ENCODE measurements at regions of chr1 and their contacts with region 1.

Region 1: DNA sequence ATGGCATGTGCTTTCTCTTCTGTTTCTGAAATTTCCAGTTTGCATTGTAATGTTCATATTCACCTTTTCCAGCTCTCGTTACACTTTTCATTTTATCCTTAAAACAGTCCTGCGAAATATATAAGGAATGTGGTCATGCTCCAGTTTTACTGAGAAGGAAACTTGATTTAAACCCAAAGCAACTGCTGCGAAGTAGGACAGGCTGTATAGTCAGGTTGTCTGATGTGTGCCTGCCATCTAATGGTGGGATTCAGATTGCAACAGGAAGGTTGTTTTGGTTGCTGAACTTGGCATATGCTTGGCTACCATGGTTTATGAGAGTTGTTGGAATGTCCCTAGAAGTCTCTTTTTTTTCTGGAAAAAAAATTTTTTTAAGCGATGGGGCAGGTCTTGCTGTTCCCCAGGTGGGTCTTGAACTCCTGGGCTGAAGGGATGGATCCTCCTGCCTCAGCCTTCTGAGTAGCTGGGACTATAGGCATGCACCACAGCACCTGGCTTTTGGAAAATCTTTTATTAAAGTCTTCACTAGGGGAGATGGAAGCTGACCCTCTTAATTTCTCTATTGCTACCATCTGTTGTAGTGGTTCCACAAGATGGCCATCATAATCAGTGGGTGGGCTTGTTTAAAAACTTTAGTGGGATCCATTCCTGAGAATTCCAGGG is 86.9 kb downstream of the UCK2 start:
- DNase-seq: peak; percentile 64 to 65
- H3K4me3 ChIP-seq: no peak overlapping the region
- H3K27ac ChIP-seq: no peak overlapping the region
- H3K4me1 ChIP-seq: no peaks in the 10 kb centered on the region
- H3K27me3 ChIP-seq: no peaks in the 10 kb centered on the region
- CTCF ChIP-seq: peak; percentile 70 to 96 (median 86)
- POLR2A ChIP-seq: no peak

Region 2: GRCh38 chr1:165392634-165393571 is 521.4 kb before region 1 on chr1:
- intact Hi-C with region 1: loop called (anchors 10 kb)
- DNase-seq: peak; percentile 75 to 77
- H3K4me3 ChIP-seq: no peak overlapping the region
- H3K27ac ChIP-seq: no peak overlapping the region
- H3K4me1 ChIP-seq: peaks cover 0 to 6% of the 10 kb centered on the region in 2 donors
- H3K27me3 ChIP-seq: no peaks in the 10 kb centered on the region
- CTCF ChIP-seq: peak; percentile 77 to 94 (median 88)
- POLR2A ChIP-seq: no peak

Region 3: DNA sequence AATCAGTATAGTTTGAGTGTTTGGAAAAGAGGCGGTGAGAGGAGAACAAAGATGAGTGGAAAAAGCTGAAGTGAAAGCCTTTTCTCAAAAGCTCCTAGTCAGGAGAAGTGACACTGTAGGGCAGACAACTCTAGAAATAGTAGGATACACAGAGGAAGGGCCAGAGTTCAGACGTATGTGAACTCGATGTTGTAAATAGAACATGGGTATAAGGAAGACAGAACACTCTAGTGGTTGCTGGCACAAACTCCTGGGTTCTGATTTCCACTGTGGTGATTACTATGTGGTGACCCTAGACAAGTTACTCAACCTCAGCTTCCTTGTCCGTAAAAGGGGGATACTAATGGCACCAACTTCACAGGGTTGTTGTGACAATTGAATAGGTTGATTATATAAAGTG is 313.5 kb before region 1 on chr1:
- intact Hi-C with region 1: loop called (anchors 5 kb)
- DNase-seq: peak; percentile 9 to 43
- H3K4me3 ChIP-seq: no peak overlapping the region
- H3K27ac ChIP-seq: no peak overlapping the region
- H3K4me1 ChIP-seq: peaks cover 9 to 11% of the 10 kb centered on the region in 2 donors
- H3K27me3 ChIP-seq: no peaks in the 10 kb centered on the region
- CTCF ChIP-seq: no peak
- POLR2A ChIP-seq: no peak

Region 4: GRCh38 chr1:165717918-165718515 is 196.2 kb before region 1 on chr1:
- intact Hi-C with region 1: loop called (anchors 5 kb)
- DNase-seq: peak; percentile 52 to 56
- H3K4me3 ChIP-seq: no peak overlapping the region
- H3K27ac ChIP-seq: no peak overlapping the region
- H3K4me1 ChIP-seq: no peaks in the 10 kb centered on the region
- H3K27me3 ChIP-seq: no peaks in the 10 kb centered on the region
- CTCF ChIP-seq: peak in 5 of 6 experiments; percentile 28 to 76 (median 62)
- POLR2A ChIP-seq: no peak

Region 5: GRCh38 chr1:166676981-166677380 is 762.7 kb after region 1 on chr1:
- intact Hi-C with region 1: no loop called
- DNase-seq: no peak
- H3K4me3 ChIP-seq: no peak overlapping the region
- H3K27ac ChIP-seq: no peak overlapping the region
- H3K4me1 ChIP-seq: no peaks in the 10 kb centered on the region
- H3K27me3 ChIP-seq: no peaks in the 10 kb centered on the region
- CTCF ChIP-seq: no peak
- POLR2A ChIP-seq: no peak

Measured in thyroid gland (tissue), 4 donors.